GM12878 (cell line): ENCODE measurements at regions of chr18 and their contacts with region 1.

Region 1: GRCh38 chr18:3525870-3526420 is 76.0 kb downstream of the TGIF1 start:
- DNase-seq: peak; percentile 65
- ATAC-seq: peak; percentile 83
- H3K4me3 ChIP-seq: peak overlapping the region; percentile 16
- H3K27ac ChIP-seq: no peak overlapping the region
- H3K4me1 ChIP-seq: peaks cover 12% of the 10 kb centered on the region
- H3K27me3 ChIP-seq: no peaks in the 10 kb centered on the region
- CTCF ChIP-seq: no peak
- EP300 ChIP-seq: peak; percentile 73 to 82; a peak in 2 of 4 replicates
- POLR2A ChIP-seq: no peak
- RAD21 ChIP-seq: 0 out of 2 replicates have a peak, but pooled peaks have one; percentile 3

Region 2: GRCh38 chr18:3447895-3448837 is 77.8 kb before region 1 on chr18:
- CTCF ChIA-PET with region 1: interaction called, 22 read pairs
- POLR2A ChIA-PET with region 1: interaction called, 5 read pairs
- RAD21 ChIA-PET with region 1: interaction called, 17 read pairs
- SMC1A ChIA-PET with region 1: interaction called, 54 read pairs
- in situ Hi-C with region 1: no loop called
- intact Hi-C with region 1: loop called (anchors 5 kb)
- DNase-seq: peak; percentile 19
- ATAC-seq: peak; percentile 76
- H3K4me3 ChIP-seq: peak overlapping the region; percentile 82
- H3K27ac ChIP-seq: peak overlapping the region; percentile 73
- H3K4me1 ChIP-seq: peaks cover 19% of the 10 kb centered on the region
- H3K27me3 ChIP-seq: peaks cover 2 to 21% of the 10 kb centered on the region in 2 experiments
- CTCF ChIP-seq: 0 out of 6 replicates have a peak, but pooled peaks of 1 of the 3 experiments have one; percentile 14
- EP300 ChIP-seq: no peak
- POLR2A ChIP-seq: peak; percentile 71; the same call in 1 of the 2 replicates
- RAD21 ChIP-seq: peak; percentile 34; the same call in 1 of the 2 replicates

Region 3: DNA sequence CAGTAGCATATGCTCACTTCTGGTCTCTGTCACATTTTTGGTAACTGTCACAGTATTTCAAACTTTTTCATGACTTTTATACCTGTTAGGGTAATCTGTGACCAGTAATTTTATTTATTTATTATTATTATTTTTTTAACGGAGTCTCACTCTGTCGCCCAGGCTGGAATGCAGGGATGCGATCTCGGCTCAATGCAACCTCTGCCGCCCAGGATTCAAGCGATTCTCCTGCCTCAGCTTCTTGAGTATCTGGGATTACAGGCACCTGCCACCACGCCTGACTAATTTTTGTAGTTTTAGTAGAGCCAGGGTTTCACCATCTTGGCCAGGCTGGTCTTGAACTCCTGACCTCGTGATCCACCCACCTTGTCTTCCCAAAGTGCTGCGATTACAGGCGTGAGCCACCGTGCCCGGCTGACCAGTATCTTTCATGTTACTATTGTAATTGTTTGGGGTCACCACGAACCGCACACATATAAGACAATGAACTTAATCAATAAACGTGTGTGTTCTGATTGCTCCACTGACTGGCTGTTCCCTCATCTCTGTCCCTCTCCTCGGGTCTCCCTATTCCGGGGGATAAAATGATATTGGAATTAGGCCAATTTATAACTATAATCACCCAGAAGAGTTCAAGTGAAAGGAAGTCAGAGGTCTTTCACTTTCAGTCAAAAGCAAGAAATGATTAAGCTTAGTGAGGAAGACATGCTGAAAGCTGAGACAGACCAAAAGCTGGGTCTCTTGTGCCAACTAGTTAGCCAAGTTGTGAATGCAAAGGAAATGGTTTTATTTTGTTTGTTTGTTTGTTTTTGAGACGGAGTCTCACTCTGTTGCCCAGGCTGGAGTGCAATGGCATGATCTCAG is 53.0 kb before region 1 on chr18:
- CTCF ChIA-PET with region 1: interaction called, 3 read pairs
- POLR2A ChIA-PET with region 1: interaction called, 8 read pairs
- RAD21 ChIA-PET with region 1: interaction called, 11 read pairs
- SMC1A ChIA-PET with region 1: interaction called, 6 read pairs
- in situ Hi-C with region 1: no loop called
- intact Hi-C with region 1: no loop called
- DNase-seq: no peak
- ATAC-seq: peak; percentile 96
- H3K4me3 ChIP-seq: no peak overlapping the region
- H3K27ac ChIP-seq: no peak overlapping the region
- H3K4me1 ChIP-seq: no peaks in the 10 kb centered on the region
- H3K27me3 ChIP-seq: no peaks in the 10 kb centered on the region
- CTCF ChIP-seq: no peak
- EP300 ChIP-seq: peak in 1 of 2 experiments; percentile 56; a peak in 1 of 4 replicates
- POLR2A ChIP-seq: no peak
- RAD21 ChIP-seq: no peak

Region 4: DNA sequence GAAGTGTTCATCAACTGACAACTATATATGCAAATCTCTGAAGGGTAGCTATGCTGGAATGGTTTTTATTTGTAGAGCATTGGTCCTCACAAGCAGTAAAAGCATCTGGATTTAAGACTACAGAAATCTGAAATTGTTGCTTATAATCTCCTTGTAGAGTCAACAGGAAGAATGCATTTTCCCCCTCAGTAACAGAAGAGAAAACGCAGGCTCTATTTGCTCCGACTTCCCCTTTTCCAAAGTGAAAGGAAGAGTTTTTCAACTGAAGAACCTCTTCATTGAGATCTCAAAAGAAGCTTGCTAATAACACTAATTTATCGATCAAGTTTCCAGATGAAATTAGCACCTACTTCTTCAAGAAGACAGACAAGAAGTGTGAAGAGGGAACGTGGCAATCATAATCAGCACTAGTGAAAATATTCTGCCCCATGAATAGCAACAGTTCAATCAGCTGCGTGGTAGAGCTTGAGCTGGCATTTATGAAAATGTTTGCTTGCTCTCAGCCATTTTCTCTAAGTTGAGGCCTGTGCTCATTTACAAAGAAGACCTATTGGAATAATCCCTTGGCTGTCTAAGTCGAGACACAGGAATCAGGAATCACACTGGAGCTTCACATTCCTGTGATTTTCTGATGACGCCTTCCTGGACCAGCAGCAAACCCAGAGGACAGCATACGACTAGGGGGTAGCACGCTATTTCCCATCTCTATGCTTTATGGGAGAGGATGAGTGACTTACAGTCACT is 32.3 kb before region 1 on chr18:
- CTCF ChIA-PET with region 1: interaction called, 7 read pairs
- POLR2A ChIA-PET with region 1: no interaction called
- RAD21 ChIA-PET with region 1: interaction called, 18 read pairs
- SMC1A ChIA-PET with region 1: interaction called, 12 read pairs
- in situ Hi-C with region 1: no loop called
- intact Hi-C with region 1: no loop called
- DNase-seq: no peak
- ATAC-seq: peak; percentile 22
- H3K4me3 ChIP-seq: peak overlapping the region; percentile 20; the same call in 1 of the 2 replicates
- H3K27ac ChIP-seq: no peak overlapping the region
- H3K4me1 ChIP-seq: no peaks in the 10 kb centered on the region
- H3K27me3 ChIP-seq: peaks cover 0 to 4% of the 10 kb centered on the region in 2 experiments; a peak in 2 of 4 replicates
- CTCF ChIP-seq: no peak
- EP300 ChIP-seq: no peak
- POLR2A ChIP-seq: no peak
- RAD21 ChIP-seq: no peak

Region 5: GRCh38 chr18:3511922-3512372 is 14.0 kb before region 1 on chr18:
- CTCF ChIA-PET with region 1: interaction called, 4 read pairs
- POLR2A ChIA-PET with region 1: interaction called, 6 read pairs
- RAD21 ChIA-PET with region 1: interaction called, 12 read pairs
- SMC1A ChIA-PET with region 1: interaction called, 13 read pairs
- in situ Hi-C with region 1: no loop called
- intact Hi-C with region 1: no loop called
- DNase-seq: no peak
- ATAC-seq: peak; percentile 78
- H3K4me3 ChIP-seq: no peak overlapping the region
- H3K27ac ChIP-seq: no peak overlapping the region
- H3K4me1 ChIP-seq: peaks cover 9% of the 10 kb centered on the region
- H3K27me3 ChIP-seq: no peaks in the 10 kb centered on the region
- CTCF ChIP-seq: no peak
- EP300 ChIP-seq: no peak; a peak in 1 of 4 replicates
- POLR2A ChIP-seq: no peak
- RAD21 ChIP-seq: no peak

Region 6: GRCh38 chr18:3541549-3542386 is 15.8 kb after region 1 on chr18:
- CTCF ChIA-PET with region 1: interaction called, 3 read pairs
- POLR2A ChIA-PET with region 1: interaction called, 5 read pairs
- RAD21 ChIA-PET with region 1: interaction called, 8 read pairs
- SMC1A ChIA-PET with region 1: interaction called, 16 read pairs
- in situ Hi-C with region 1: no loop called
- intact Hi-C with region 1: no loop called
- DNase-seq: peak; percentile 27
- ATAC-seq: peak; percentile 95
- H3K4me3 ChIP-seq: no peak overlapping the region
- H3K27ac ChIP-seq: no peak overlapping the region
- H3K4me1 ChIP-seq: peaks cover 11% of the 10 kb centered on the region
- H3K27me3 ChIP-seq: no peaks in the 10 kb centered on the region
- CTCF ChIP-seq: no peak
- EP300 ChIP-seq: peak; percentile 65 to 81; a peak in 3 of 4 replicates
- POLR2A ChIP-seq: no peak
- RAD21 ChIP-seq: no peak

Region 7: DNA sequence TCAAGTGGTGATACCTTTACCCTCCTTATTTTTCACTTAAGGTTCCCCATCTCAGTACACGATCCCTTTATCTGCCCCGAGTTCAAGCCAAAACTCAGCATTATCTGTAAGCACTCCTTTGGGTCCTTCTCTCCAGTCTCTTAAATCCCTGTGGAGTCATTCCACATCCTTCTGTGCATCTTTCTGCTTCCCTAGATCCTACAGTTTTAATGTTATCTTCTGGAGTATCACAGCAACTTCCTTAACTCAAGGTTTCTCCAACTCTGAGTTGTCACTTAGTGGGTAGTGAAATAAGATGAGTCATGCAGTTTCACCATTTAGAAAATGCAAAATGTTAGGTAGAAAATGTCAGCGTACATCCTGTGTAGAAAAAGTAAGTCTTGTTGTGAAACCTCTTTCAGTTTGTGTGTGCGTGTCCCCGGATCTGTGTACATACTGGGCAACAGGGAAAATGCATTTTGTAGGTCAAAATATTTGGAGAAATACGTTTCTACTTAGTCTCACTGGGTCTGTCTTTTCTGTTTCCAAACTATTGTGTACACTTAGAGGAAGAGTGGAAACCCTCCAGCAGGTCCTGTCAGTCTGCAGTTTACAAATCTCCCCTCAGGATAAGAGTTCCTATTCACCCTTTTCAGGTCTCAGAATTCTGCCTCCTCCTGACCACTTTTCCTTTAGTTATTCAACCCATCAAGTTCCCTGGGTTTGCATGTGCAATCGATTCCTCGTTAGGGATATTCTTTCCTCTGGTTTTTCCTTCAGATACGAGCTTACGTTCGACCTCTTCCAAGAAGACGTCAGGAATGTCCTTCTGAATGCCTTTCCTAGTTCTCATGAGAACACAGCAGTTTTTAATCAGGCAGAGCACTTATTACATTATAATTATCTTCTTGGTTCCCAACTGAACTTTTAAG is 78.8 kb after region 1 on chr18:
- CTCF ChIA-PET with region 1: no interaction called
- POLR2A ChIA-PET with region 1: interaction called, 12 read pairs
- RAD21 ChIA-PET with region 1: interaction called, 7 read pairs
- SMC1A ChIA-PET with region 1: interaction called, 4 read pairs
- in situ Hi-C with region 1: no loop called
- intact Hi-C with region 1: no loop called
- DNase-seq: peak; percentile 80
- ATAC-seq: peak; percentile 90
- H3K4me3 ChIP-seq: peak overlapping the region; percentile 57
- H3K27ac ChIP-seq: peak overlapping the region; percentile 80
- H3K4me1 ChIP-seq: peaks cover 25% of the 10 kb centered on the region
- H3K27me3 ChIP-seq: no peaks in the 10 kb centered on the region
- CTCF ChIP-seq: no peak
- EP300 ChIP-seq: peak; percentile 49 to 57; a peak in 2 of 4 replicates
- POLR2A ChIP-seq: 0 out of 2 replicates have a peak, but pooled peaks have one; percentile 32
- RAD21 ChIP-seq: no peak